Calu3 (cell line): ENCODE measurements at regions of chr5 and their contacts with region 1.

Region 1: DNA sequence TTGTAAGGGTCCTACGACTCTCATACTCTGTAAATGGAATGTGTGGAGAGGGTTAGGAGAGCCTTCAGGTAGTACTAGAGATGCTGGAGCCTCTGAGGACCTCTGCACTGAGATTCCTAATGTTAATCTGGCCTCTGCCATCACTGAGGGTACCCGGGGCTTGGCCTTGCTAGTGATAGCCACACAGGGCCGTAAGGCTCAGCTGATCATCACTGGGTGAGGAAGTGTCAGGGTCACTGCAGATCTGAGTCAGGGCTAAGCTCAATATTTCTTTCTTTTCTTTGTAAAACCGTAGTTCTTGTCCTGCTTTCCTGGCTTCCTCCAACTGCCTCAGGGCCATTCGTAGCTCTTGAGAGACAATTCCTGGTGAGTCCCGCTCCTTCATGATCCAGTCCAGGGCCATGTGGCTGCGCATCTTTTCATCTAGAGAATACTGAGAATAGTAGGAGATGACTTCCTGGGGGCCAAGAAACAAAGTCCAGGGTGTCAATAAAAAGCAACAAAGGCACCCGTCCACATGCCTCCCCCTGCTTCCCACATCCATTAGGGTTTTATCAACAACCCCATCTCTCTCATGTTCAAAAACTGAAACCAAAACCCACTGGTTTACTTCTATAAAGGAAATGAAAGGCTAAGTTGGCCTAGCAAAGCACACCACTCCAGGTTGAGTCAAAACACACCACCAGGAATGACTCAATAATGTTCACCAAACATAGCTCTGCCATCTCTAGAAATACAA is 47.7 kb downstream of the LIX1 start:
- DNase-seq: no peak
- H3K4me3 Mint-ChIP-seq: no peak overlapping the region
- H3K27ac Mint-ChIP-seq: no peak overlapping the region
- H3K4me1 Mint-ChIP-seq: no peaks in the 10 kb centered on the region
- H3K27me3 Mint-ChIP-seq: no peaks in the 10 kb centered on the region
- CTCF ChIP-seq: no peak

Region 2: DNA sequence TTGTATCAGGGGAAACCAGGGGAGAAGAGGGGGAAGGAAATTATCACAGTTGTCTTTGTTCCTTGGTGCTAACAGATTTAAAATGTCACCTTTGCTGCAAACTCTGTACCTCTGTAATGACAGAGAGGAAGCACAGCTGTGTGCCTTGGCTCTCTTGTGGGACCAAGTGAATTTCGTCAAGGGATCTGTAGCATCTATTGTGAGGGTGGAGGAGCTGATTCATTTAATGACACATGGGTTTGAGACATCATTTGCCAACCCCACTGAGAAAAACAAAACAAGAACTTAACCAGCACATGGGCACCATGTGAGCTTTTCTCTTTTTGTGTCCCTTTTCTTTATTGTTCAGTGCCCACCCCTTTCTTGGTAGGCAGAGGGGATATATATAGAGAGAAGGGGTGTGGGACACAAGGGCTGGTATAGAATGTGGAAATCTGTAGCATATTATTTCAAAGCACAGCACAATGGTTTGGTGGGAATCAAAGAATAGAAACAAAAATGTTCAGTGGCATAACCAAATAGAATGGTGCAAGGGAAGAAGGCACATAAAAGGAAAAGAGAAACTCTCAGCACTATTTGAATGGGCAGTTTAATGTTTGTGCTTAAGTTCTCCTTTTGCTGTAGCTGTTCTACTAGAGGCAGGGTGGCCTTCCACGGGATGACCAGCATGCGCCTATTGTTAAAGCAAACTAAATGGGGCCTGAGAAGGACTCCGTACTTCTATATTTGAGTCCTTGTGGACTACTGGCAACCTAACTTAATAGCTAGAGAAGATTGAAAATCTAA is 15.6 kb before region 1 on chr5:
- CTCF ChIA-PET with region 1: interaction called, 12 read pairs
- intact Hi-C with region 1: no loop called
- DNase-seq: no peak
- H3K4me3 Mint-ChIP-seq: no peak overlapping the region
- H3K27ac Mint-ChIP-seq: no peak overlapping the region
- H3K4me1 Mint-ChIP-seq: no peaks in the 10 kb centered on the region
- H3K27me3 Mint-ChIP-seq: no peaks in the 10 kb centered on the region
- CTCF ChIP-seq: no peak